ENCODE measurements at regions of chr2 and their contacts with region 1.

Region 1: DNA sequence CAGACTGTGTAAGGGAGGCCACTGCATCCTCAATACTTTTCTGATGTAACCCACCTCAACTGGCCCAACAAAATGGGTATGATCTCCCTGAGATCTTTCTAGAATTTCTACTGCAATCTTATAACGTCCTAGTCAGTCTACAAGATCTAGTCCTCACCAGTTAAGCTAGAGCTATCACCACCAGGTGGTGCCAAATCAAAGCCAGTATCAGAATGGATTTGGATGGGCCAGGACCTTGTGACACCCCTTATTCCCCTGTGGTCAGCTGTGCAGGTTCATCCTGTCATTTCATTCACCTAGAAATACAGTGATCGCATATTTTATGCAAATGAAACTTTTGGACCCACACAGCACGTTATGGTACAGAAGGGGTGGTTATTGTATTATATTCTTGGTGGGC is 90.3 kb downstream of the OLA1 start:
- DNase-seq: no peak
- ATAC-seq: peak; percentile 37
- H3K4me3 Mint-ChIP-seq: no peak overlapping the region
- H3K27ac Mint-ChIP-seq: no peak overlapping the region
- H3K4me1 Mint-ChIP-seq: no peaks in the 10 kb centered on the region
- H3K27me3 Mint-ChIP-seq: no peaks in the 10 kb centered on the region
- CTCF ChIP-seq: no peak

Region 2: DNA sequence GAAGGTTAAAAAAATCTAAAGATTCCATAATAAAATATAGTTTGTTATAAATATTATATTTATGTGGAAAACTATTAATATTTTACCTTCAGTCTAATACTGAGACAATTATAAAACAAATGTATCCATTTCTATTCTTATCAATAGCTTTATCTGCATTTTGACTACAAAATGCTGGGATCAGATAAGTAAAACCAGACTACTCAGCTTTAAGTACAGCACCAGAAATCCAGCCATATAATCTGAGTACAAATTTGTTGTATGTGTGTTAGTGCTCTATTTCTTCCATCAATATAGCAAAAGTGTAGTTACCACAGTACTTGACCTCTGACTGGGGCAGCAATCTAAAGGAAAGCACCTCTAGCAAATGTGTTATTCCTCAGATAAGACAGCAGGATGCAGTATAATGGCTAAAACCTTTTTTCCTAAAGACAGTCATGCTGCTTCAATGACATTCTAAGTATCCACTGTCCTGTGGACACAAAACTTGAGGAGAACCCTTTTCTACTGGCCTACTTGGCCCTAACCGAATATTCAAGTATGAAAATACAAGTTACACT is 22.2 kb after region 1 on chr2:
- CTCF ChIA-PET with region 1: no interaction called
- POLR2A ChIA-PET with region 1: no interaction called
- intact Hi-C with region 1: loop called (anchors 1 kb)
- DNase-seq: no peak
- ATAC-seq: no peak
- H3K4me3 Mint-ChIP-seq: no peak overlapping the region
- H3K27ac Mint-ChIP-seq: no peak overlapping the region
- H3K4me1 Mint-ChIP-seq: peaks cover 16% of the 10 kb centered on the region
- H3K27me3 Mint-ChIP-seq: no peaks in the 10 kb centered on the region
- CTCF ChIP-seq: no peak

Region 3: DNA sequence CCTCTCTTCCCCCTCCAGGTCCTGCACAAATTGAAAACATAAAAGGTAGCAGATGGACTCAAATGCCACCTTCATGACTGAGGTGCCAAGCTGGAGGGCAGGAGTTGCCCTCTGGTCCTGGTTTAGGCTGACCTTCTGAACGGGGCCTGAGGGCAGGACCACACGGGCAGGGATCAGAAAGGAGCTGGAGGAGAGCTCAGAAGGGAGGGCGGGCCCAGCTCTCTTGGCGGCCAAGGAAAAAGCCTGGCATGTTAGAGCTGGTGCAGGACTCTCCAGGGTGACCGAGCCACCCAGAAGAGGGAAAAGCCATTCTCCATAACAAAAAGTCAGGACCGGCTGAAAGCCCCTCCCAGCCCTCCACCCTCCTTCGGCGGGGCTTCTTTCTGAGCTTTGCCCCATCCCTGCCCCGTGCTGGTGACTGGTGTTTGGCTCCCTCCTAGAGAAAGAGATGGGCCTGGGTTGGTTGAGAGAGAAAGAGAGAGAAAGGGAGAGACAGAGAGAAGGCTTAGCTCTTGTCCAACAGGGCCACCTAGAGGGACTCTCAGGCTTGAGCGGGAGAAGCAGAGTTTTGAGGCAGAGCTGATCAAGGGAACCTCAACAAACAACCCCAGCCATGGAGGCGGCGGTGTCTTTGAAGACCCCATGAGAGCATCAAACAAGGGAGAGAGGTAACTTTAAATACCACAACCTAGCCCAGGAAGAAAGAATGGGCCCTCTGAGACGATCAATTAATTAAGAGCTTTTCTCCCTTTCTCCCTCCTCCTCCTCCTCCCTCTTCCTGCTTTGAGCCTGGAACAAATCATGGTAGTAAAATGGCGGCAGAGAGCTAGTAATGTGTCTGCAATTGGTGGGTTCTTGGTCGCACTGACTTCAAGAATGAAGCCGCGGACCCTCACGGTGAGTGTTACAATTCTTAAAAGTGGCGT is 388.8 kb after region 1 on chr2:
- CTCF ChIA-PET with region 1: no interaction called
- POLR2A ChIA-PET with region 1: no interaction called
- intact Hi-C with region 1: no loop called
- DNase-seq: no peak
- ATAC-seq: peak; percentile 40
- H3K4me3 Mint-ChIP-seq: no peak overlapping the region
- H3K27ac Mint-ChIP-seq: no peak overlapping the region
- H3K4me1 Mint-ChIP-seq: peaks cover 3% of the 10 kb centered on the region
- H3K27me3 Mint-ChIP-seq: no peaks in the 10 kb centered on the region
- CTCF ChIP-seq: no peak

Measured in activated B cell treated with CpG ODN at 0.5 μM for 24 hours (primary cell).